Naive thymus-derived CD8-positive, alpha-beta T cell (primary cell): ENCODE measurements at regions of chr4 and their contacts with region 1.

Region 1: DNA sequence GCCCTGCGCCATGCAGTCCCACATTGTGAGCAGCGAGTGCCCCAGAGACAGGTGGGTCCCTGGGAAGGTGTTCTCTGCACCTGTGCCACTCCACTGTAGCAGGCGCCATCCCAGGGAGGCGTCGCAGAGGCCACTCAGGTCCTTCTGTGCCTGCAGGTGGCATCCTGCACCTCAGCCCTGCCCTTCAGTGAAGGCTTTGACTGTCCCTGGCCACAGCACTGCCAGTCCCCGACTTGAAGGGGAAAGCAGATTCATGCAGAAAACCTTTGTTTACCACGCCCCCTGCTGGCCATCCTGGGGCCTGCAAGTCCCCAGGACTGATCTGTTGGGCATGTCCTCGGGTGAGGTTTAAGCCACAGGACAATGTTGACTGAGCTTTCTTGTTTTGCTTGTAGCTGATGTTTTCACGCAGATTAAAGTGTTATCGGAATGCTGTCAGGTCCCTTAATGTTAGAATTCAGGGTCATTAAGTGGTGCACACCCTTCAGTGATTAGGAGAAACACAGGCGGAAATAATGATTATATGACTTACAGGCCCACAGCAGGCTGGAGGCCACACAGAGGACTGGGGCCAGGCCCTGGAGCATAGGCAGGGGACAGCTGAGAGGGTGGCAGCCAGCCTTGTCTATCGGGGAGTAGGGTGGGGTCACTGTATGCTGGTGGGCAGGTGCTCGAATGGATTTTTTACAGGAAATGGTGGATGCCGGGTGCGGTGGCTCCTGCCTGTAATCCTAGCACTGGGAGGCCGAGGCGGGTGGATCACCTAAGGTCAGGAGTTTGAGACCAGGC is 5.0 kb downstream of the TACC3 start:
- DNase-seq: peak; percentile 79 to 93 (median 87)
- ATAC-seq: peak; percentile 42
- H3K4me3 Mint-ChIP-seq: peak overlapping the region in 9 of 10 donors; percentile 27 to 89 (median 68)
- H3K27ac Mint-ChIP-seq: peak overlapping the region; percentile 41 to 90 (median 79)
- H3K4me1 Mint-ChIP-seq: peaks cover 37 to 80% (median 71%) of the 10 kb centered on the region in 4 donors
- H3K27me3 Mint-ChIP-seq: no peaks in the 10 kb centered on the region

Region 2: DNA sequence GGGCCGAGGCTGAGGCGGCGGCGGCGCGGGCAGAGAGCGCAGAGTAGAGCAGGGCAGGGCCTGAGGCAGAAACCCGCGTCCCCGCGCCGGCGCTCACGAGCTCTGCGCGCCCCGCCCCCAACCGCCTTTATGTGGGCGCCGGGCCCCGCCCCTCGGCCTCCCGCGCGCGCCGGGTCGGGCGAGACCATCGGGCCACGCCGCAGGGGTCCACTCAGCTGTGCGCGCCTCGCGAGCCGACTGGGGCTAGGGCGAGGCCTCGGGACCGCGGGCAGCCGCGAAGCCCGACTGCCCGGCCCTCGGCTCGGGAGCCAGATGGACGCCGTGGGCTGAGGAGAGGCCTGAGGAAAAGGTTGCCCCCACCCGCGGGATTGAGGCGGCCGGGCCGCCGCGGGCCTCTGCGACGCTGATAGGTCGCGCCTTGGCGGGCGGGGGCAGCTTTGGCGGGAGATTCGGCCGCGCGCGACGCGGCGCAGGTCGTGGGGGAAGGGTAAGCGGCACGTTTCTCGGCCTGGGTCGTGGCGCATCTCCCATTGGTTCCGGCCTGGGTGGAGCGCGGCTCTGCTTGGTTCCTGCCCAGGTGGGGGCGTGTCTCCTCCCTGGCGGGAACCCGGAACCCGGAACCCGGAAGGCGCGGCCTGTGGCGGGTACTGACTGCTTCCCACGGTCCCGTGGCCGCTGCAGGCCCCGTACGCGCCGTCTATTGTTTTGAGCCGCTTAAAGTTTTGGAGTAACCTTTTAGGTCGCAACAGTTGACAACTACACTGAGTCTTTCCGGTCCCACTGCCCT is 13.9 kb before region 1 on chr4 and contains the start of gene SLBP:
- POLR2A ChIA-PET with region 1: interaction called, 124 read pairs
- DNase-seq: peak; percentile 96 to 99 (median 98)
- ATAC-seq: peak; percentile 86 to 88
- H3K4me3 Mint-ChIP-seq: peak within 1 kb of the TSS; percentile 91 to 97 (median 94)
- H3K27ac Mint-ChIP-seq: peak within 1 kb of the TSS; percentile 91 to 97 (median 96)
- H3K4me1 Mint-ChIP-seq: peaks cover 20 to 76% (median 58%) of the 10 kb centered on the region in 4 donors
- H3K27me3 Mint-ChIP-seq: no peaks in the 10 kb centered on the region
- polyA plus RNA-seq, gene SLBP: 42.6 to 49.3 (median 46.6) TPM